CD8-positive, alpha-beta T cell (primary cell): ENCODE measurements at regions of chr20 and their contacts with region 1.

Region 1: GRCh38 chr20:35954200-35954906 is at the start of gene SCAND1:
- DNase-seq: peak; percentile 93 to 99 (median 96)
- ATAC-seq: peak; percentile 84
- H3K4me3 ChIP-seq: peak within 1 kb of the TSS; percentile 77 to 95
- H3K4me3 Mint-ChIP-seq: peak within 1 kb of the TSS; percentile 99
- H3K27ac ChIP-seq: peak within 1 kb of the TSS; percentile 99
- H3K27ac Mint-ChIP-seq: peak within 1 kb of the TSS; percentile 99
- H3K4me1 ChIP-seq: peaks cover 23% of the 10 kb centered on the region
- H3K4me1 Mint-ChIP-seq: peaks cover 25% of the 10 kb centered on the region
- H3K27me3 ChIP-seq: no peaks in the 10 kb centered on the region
- H3K27me3 Mint-ChIP-seq: no peaks in the 10 kb centered on the region
- CTCF ChIP-seq: peak; percentile 97
- total RNA-seq, gene SCAND1: 94.8 to 100 TPM

Region 2: DNA sequence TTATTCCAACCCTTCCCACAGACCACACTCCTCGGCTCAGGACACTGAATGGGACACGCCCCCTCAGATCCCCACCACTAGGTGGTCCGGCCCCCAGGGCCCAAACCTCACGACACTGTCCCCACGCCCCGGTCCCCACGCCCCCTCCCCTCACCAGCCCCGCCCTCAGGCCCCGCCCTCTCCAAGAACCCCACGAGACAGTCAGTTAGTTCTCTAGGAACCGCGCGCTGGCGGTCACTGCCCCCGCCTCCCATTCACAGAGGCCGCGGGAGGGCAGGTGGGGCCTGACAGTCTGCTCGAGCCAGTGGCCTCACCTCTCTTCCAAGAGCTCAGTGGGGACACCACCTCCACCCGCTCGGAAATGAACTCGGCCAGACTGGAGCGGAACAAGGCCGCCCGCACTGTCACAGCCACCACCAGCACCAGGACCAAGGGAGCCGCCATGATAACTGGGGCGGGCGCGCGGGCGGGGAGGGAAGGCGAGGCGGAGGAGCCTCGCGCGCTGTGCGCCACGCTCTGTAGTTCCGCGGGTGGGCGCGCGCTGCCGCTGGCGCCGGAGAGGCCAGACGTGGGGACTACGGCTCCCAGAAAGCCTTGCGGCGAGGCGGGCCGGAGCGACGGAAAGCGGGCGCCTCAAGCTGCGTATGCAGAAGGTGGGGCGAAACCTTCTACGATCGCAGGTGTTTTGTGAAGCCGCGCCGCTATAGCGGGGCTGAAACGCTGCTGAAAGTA is 1277.5 kb before region 1 on chr20 and contains the start of gene PIGU:
- CTCF ChIA-PET with region 1: interaction called, 3 read pairs
- POLR2A ChIA-PET with region 1: no interaction called
- intact Hi-C with region 1: loop called in 1 of 2 experiments (anchors 5 kb)
- DNase-seq: peak; percentile 92 to 98 (median 96)
- ATAC-seq: peak; percentile 96
- H3K4me3 ChIP-seq: peak within 1 kb of the TSS; percentile 80 to 94
- H3K4me3 Mint-ChIP-seq: peak within 1 kb of the TSS; percentile 97
- H3K27ac ChIP-seq: peak within 1 kb of the TSS; percentile 83 to 90
- H3K27ac Mint-ChIP-seq: peak within 1 kb of the TSS; percentile 96
- H3K4me1 ChIP-seq: peaks cover 16% of the 10 kb centered on the region
- H3K4me1 Mint-ChIP-seq: peaks cover 22% of the 10 kb centered on the region
- H3K27me3 ChIP-seq: no peaks in the 10 kb centered on the region
- H3K27me3 Mint-ChIP-seq: no peaks in the 10 kb centered on the region
- CTCF ChIP-seq: no peak
- total RNA-seq, gene PIGU: 3.3 to 5.2 TPM

Region 3: DNA sequence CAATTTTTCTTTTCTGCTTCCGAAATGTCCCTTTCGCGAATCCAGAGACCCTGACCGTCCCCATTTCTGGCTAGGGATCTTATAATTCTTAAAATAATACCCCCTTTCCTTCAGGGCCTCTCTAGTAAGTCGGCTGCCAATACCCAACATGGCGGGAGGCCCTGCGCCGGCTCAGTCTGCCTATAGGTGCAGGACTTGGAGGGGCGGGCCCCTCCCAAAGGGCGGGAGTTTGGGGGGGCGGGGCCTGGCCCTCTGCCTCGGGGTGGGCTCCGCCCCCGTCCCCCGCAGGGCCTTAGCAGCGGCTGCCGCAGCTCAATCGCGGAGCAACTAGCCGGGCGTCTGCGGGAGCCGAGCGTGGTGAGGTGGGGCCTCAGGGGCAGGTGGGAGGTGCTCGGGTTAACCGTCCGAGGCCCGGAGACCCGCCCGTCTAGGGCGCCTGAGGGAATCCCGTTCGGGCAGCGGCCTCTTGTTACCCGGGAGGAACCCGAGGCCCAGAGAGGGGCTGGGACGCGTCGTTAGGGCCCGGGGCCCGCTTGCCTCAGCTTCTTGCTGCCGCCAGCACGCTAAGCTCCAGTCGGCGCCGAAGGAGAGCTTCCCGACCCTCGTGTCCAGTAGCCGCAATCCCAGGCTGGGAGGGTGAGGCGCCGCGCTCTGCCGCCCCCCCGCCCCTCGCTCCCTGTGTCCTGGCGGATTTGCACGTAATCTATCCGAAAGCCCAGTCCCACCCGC is 499.3 kb before region 1 on chr20 and contains the start of gene CEP250:
- CTCF ChIA-PET with region 1: no interaction called
- POLR2A ChIA-PET with region 1: interaction called, 22 read pairs
- intact Hi-C with region 1: loop called (anchors 1 to 2 kb)
- DNase-seq: peak; percentile 86 to 96 (median 95)
- ATAC-seq: peak; percentile 98
- H3K4me3 ChIP-seq: peak within 1 kb of the TSS; percentile 62 to 94
- H3K4me3 Mint-ChIP-seq: peak within 1 kb of the TSS; percentile 94
- H3K27ac ChIP-seq: peak within 1 kb of the TSS; percentile 52 to 94
- H3K27ac Mint-ChIP-seq: peak within 1 kb of the TSS; percentile 97
- H3K4me1 ChIP-seq: peaks cover 10% of the 10 kb centered on the region
- H3K4me1 Mint-ChIP-seq: peaks cover 21% of the 10 kb centered on the region
- H3K27me3 ChIP-seq: no peaks in the 10 kb centered on the region
- H3K27me3 Mint-ChIP-seq: no peaks in the 10 kb centered on the region
- CTCF ChIP-seq: no peak
- total RNA-seq, gene CEP250: 33.4 to 34.4 TPM

Region 4: GRCh38 chr20:35741892-35742740 is 212.2 kb before region 1 on chr20 and contains the start of gene RBM39:
- CTCF ChIA-PET with region 1: interaction called, 14 read pairs
- POLR2A ChIA-PET with region 1: interaction called, 65 read pairs
- intact Hi-C with region 1: no loop called
- DNase-seq: peak; percentile 97 to 100 (median 99)
- ATAC-seq: peak; percentile 81
- H3K4me3 ChIP-seq: peak within 1 kb of the TSS; percentile 87 to 98
- H3K4me3 Mint-ChIP-seq: peak within 1 kb of the TSS; percentile 96
- H3K27ac ChIP-seq: peak within 1 kb of the TSS; percentile 99 to 100
- H3K27ac Mint-ChIP-seq: peak within 1 kb of the TSS; percentile 100
- H3K4me1 ChIP-seq: peaks cover 44% of the 10 kb centered on the region
- H3K4me1 Mint-ChIP-seq: peaks cover 47% of the 10 kb centered on the region
- H3K27me3 ChIP-seq: no peaks in the 10 kb centered on the region
- H3K27me3 Mint-ChIP-seq: no peaks in the 10 kb centered on the region
- CTCF ChIP-seq: peak; percentile 44
- total RNA-seq, gene RBM39: 1,168 to 1,202 TPM

Region 5: GRCh38 chr20:36050436-36051317 is 96.3 kb after region 1 on chr20:
- CTCF ChIA-PET with region 1: no interaction called
- POLR2A ChIA-PET with region 1: interaction called, 10 read pairs
- intact Hi-C with region 1: loop called (anchors 1 kb)
- DNase-seq: peak; percentile 72 to 95 (median 89)
- ATAC-seq: peak; percentile 93
- H3K4me3 ChIP-seq: peak overlapping the region; percentile 81 to 93
- H3K4me3 Mint-ChIP-seq: peak overlapping the region; percentile 90
- H3K27ac ChIP-seq: peak overlapping the region; percentile 84 to 94
- H3K27ac Mint-ChIP-seq: peak overlapping the region; percentile 88
- H3K4me1 ChIP-seq: peaks cover 20% of the 10 kb centered on the region
- H3K4me1 Mint-ChIP-seq: peaks cover 45% of the 10 kb centered on the region
- H3K27me3 ChIP-seq: no peaks in the 10 kb centered on the region
- H3K27me3 Mint-ChIP-seq: peaks cover 2% of the 10 kb centered on the region
- CTCF ChIP-seq: no peak